GM10248 (cell line): ENCODE measurements at regions of chr1 and their contacts with region 1.

Region 1: GRCh38 chr1:155250633-155251449 is 4.4 kb downstream of the ENTREP3 start:
- DNase-seq: peak; percentile 96
- CTCF ChIP-seq: peak; percentile 100

Region 2: DNA sequence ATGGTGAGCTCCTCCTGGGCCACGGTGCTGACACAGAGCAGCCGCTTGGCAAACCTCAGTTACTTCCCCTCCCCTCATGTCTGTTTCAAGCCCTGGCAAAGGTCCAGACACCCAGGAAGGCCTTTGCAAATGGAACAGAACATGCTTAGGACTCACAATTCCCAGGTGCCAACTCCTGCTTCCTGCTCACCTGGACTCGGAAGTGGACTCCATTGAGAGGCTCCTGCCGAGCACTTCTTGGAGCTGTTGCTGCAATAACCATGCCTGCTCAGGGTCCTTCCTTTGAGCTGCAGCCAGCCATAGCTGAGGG is 228.0 kb before region 1 on chr1:
- CTCF ChIA-PET with region 1: no interaction called
- POLR2A ChIA-PET with region 1: no interaction called
- DNase-seq: no peak
- CTCF ChIP-seq: no peak

Region 3: GRCh38 chr1:155193275-155193990 is 57.4 kb before region 1 on chr1:
- CTCF ChIA-PET with region 1: interaction called, 35 read pairs
- POLR2A ChIA-PET with region 1: no interaction called
- DNase-seq: peak; percentile 89
- CTCF ChIP-seq: peak; percentile 99

Region 4: GRCh38 chr1:155227261-155228095 is 23.4 kb before region 1 on chr1:
- CTCF ChIA-PET with region 1: interaction called, 33 read pairs
- POLR2A ChIA-PET with region 1: no interaction called
- DNase-seq: peak; percentile 99
- CTCF ChIP-seq: no peak

Region 5: DNA sequence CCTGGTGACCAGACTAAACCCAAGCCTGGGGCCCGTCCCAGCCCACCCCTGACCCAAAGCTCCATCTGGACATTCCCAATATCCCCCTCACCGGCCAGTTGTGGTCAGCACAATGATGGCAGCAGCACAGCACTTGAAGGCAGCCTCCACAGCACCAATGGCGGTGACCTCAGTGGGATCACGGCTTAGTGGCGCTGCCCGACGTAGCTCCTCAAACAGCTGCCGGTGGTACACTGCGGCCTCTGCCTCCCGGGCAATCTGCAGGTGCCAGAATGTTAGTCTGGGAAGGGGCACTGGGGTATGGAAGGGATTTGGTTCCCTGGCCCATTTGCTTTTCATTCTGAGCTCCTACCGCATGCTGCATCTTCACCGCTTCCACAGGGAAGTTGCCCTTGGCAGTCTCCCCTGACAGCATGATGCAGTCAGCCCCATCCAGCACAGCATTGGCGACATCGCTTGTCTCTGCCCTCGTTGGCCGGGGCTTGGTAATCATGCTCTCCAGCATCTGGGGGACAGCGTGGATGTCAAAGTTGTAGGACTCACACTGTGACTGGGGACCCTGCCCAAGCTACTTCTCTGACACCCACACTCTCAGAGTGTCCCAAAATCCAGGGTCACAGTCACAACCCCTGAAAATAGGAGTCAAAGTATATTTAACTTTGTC is 42.4 kb after region 1 on chr1:
- CTCF ChIA-PET with region 1: interaction called, 16 read pairs
- POLR2A ChIA-PET with region 1: interaction called, 3 read pairs
- DNase-seq: no peak
- CTCF ChIP-seq: no peak

Region 6: DNA sequence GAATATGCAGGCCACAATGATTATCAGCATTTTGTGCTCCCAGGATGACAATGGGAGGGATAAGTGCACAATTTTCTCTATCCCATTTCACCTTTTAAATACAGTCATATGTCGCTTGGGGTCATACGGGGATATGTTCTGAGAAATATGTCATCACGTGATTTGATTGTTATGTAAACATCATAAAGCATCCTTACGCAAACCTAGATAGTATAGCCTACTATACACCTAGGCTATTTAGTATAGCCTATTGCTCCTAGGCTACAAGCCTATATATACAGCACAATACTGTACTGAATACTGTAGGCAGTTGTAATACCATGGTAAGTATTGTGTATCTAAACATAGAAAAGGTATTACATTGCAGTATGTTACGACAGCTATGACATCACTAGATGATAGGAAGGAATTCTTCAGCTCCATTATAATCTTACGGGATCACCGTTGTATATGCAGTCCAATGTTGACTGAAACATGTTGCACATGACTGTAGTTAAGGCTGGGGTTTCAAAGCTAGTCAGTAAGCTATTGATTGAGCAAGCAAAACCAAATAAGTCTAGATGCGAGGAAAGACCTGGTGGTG is 88.8 kb after region 1 on chr1:
- CTCF ChIA-PET with region 1: interaction called, 16 read pairs
- POLR2A ChIA-PET with region 1: no interaction called
- DNase-seq: no peak
- CTCF ChIP-seq: no peak

Region 7: GRCh38 chr1:155591770-155592169 is 340.9 kb after region 1 on chr1:
- CTCF ChIA-PET with region 1: interaction called, 88 read pairs
- POLR2A ChIA-PET with region 1: no interaction called
- DNase-seq: peak; percentile 57
- CTCF ChIP-seq: peak; percentile 46